ENCODE measurements at regions of chr11 and their contacts with region 1.

Region 1: GRCh38 chr11:44861849-44862749 is 88.6 kb downstream of the TP53I11 start:
- DNase-seq: peak; percentile 76
- H3K4me3 Mint-ChIP-seq: no peak overlapping the region
- H3K27ac Mint-ChIP-seq: peak overlapping the region; percentile 68
- H3K4me1 Mint-ChIP-seq: peaks cover 21% of the 10 kb centered on the region
- H3K27me3 Mint-ChIP-seq: peaks cover 56% of the 10 kb centered on the region

Region 2: DNA sequence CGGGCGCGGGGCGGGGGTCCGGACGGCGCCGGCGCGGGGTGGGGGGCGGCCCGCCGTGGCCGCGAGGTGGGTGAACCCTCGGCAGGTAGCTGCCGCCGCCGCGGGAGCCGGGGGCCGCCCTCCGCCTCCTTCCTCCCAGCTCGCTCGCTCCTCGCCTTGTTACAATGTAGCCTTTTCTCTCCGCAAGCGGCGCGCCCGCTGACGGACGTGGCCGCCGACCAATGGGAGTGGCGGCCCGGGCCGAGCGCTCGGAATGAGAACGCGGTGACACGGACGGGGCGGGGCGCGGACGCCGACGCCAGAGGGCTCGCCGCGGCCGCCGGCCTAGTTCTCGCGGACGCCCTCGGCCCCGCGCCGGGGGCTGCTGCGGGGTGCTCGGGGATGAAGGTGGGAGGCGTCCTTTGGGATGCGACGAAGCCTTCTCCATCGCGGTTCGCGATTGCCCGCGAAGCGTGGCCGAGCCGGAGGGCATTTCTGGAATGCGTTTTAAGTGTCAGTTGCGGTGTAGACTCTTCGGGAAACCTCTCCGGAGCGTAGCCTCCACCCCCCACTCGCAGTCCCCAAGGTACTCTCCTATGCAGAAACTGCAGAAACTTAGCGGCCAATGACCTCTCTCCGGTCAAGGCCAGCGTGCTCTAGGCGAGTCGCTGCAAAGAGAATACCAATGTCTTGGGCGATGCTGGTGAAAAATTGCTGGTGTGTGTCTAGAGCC is 285.1 kb after region 1 on chr11:
- intact Hi-C with region 1: loop called (anchors 1 kb)
- DNase-seq: peak; percentile 91
- H3K4me3 Mint-ChIP-seq: peak overlapping the region; percentile 81
- H3K27ac Mint-ChIP-seq: peak overlapping the region; percentile 83
- H3K4me1 Mint-ChIP-seq: peaks cover 13% of the 10 kb centered on the region
- H3K27me3 Mint-ChIP-seq: peaks cover 35% of the 10 kb centered on the region

Measured in activated T-helper 1 cell treated with anti-CD3 and anti-CD28 coated beads, Interleukin-12 subunit alpha, Interleukin-12 subunit beta, Interleukin-2, Interleukin-4 antibody, amounts not matched to agents 30 ng/mL and 10 ng/mL and 1 ng/mL, durations not matched to agents 14 hours and 24 hours and 36 hours (primary cell).